ENCODE measurements at regions of chr15 and their contacts with region 1.

Region 1: DNA sequence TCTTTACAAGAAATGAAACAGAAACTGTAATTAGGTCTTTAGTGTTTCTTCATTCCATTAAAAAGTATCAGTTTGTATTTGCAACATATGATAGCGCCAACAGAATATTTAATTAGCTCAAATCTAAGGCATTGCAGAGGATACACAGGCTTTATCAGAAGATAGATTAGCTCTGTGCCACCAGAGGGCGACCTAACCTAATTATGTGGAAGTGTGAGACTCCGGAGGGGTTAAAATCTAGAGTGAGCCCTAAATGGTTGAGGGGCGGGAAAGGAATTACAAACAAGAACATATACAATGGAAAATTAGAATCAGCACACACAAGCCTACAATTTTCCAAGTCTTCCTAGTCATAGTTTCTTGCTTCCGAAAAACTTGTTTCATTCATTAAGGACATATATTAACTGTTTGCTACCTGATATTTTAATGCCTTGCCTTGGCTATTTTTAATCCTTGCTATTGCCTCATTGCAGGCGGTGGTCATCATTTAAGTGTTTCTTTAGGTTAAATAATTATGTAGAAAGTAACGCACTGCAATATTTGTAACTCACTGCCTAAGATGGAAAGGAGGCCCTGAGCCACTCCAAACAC is 18.0 kb upstream of the RYR3 start:
- DNase-seq: peak; percentile 75
- H3K4me3 Mint-ChIP-seq: no peak overlapping the region
- H3K27ac Mint-ChIP-seq: no peak overlapping the region
- H3K4me1 Mint-ChIP-seq: no peaks in the 10 kb centered on the region
- H3K27me3 Mint-ChIP-seq: no peaks in the 10 kb centered on the region

Region 2: GRCh38 chr15:33234014-33234461 is 58.8 kb before region 1 on chr15:
- CTCF ChIA-PET with region 1: no interaction called
- intact Hi-C with region 1: loop called (anchors 5 kb)
- DNase-seq: peak; percentile 10
- H3K4me3 Mint-ChIP-seq: no peak overlapping the region
- H3K27ac Mint-ChIP-seq: no peak overlapping the region
- H3K4me1 Mint-ChIP-seq: no peaks in the 10 kb centered on the region
- H3K27me3 Mint-ChIP-seq: peaks cover 6% of the 10 kb centered on the region

Region 3: GRCh38 chr15:33330931-33331330 is 38.1 kb after region 1 on chr15:
- CTCF ChIA-PET with region 1: no interaction called
- intact Hi-C with region 1: no loop called
- DNase-seq: no peak
- H3K4me3 Mint-ChIP-seq: no peak overlapping the region
- H3K27ac Mint-ChIP-seq: no peak overlapping the region
- H3K4me1 Mint-ChIP-seq: no peaks in the 10 kb centered on the region
- H3K27me3 Mint-ChIP-seq: peaks cover 48% of the 10 kb centered on the region

Region 4: DNA sequence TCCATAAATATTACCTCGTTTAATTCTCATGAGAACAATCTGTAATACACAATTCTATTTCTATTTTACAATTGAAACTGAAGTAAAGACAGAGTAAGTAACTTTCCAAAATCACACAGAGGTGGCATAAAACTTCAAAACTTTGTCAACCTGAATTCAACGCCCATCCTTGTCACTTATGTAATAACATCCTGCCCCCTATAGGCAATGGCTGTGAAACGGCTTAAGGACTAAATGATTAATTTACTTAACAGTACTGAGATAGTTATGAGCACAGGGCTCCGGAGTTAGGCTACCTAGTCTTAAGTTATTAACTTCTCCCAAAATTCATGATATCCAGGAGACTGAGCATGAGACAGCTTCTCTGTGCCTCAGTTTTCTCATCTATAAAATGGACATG is 382.4 kb after region 1 on chr15:
- CTCF ChIA-PET with region 1: no interaction called
- intact Hi-C with region 1: loop called (anchors 1 kb)
- DNase-seq: peak; percentile 15
- H3K4me3 Mint-ChIP-seq: no peak overlapping the region
- H3K27ac Mint-ChIP-seq: no peak overlapping the region
- H3K4me1 Mint-ChIP-seq: no peaks in the 10 kb centered on the region
- H3K27me3 Mint-ChIP-seq: peaks cover 17% of the 10 kb centered on the region

Region 5: GRCh38 chr15:33700695-33701304 is 408.0 kb after region 1 on chr15:
- CTCF ChIA-PET with region 1: interaction called, 28 read pairs
- intact Hi-C with region 1: loop called (anchors 1 kb)
- DNase-seq: peak; percentile 76
- H3K4me3 Mint-ChIP-seq: no peak overlapping the region
- H3K27ac Mint-ChIP-seq: no peak overlapping the region
- H3K4me1 Mint-ChIP-seq: no peaks in the 10 kb centered on the region
- H3K27me3 Mint-ChIP-seq: peaks cover 10% of the 10 kb centered on the region

Region 6: DNA sequence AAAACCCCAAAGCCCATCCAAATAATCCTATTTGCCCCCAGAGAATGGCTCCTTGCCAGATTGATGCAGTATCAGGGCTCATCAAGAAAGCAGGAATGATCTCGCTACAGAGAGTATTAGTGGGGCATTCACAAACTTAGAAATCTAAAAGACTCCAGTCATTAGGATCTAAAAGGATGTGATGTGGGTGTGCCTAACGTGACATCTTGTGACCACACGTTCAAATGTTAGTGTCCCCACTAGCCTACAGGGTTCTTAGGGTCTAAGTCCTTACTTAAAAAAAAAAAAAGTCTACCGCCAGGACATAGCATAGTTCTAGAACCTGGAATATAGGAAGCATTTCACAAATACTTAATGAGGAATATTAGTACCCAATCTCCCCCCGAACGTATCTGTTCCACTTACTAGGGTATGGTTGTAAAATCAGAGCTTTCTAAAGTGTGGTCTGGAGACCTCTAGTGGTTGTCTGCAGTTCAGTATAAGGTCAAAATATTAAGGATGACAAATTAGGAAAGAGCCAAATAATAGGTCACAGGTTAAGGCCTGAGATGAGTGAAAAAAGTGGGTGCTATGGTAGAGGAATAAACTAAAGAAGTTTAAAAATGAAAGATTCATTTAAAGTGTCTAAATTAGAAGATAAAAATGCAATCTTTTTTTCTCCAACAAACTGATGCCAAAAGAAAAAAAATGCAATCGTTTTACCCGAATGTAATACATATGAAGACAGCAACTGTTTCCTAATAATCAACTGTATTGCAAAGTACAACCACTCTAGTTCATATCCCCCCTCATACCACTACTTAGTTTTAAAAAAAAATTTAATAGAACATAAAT is 671.2 kb after region 1 on chr15:
- CTCF ChIA-PET with region 1: no interaction called
- intact Hi-C with region 1: loop called (anchors 10 kb)
- DNase-seq: no peak
- H3K4me3 Mint-ChIP-seq: no peak overlapping the region
- H3K27ac Mint-ChIP-seq: no peak overlapping the region
- H3K4me1 Mint-ChIP-seq: no peaks in the 10 kb centered on the region
- H3K27me3 Mint-ChIP-seq: no peaks in the 10 kb centered on the region